ENCODE measurements at regions of chr9 and their contacts with region 1.

Region 1: DNA sequence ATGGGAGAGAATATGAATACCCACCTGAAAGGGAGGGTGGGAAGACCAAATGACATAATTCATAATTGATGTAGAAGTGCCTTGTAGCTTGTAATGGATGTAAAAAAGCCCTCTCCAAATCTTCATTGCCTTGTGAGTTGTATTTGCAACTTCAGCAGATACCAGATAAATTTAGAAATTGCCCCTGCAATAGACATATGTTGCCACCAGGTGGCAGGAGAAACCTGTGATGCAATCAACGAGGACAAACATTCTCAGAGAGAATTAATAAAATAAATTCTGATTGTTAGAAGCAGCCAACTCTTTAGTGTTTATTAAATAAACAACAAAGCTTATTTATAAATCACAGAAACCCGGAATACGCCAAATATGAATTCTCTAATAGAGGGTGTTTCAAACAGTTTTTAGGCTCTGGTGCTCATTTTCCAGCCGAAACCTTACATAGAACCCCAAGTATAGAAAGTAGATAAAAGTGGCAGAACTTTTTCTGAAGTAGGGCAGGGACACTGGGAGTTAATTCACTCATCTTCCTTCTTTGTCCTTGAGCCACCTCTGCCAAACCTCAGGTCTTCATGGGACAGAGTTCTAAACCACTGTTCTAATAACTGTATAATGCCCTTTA is 147.8 kb downstream of the TMEM38B start:
- DNase-seq: peak; percentile 46
- H3K4me3 Mint-ChIP-seq: no peak overlapping the region
- H3K27ac Mint-ChIP-seq: no peak overlapping the region
- H3K4me1 Mint-ChIP-seq: no peaks in the 10 kb centered on the region
- H3K27me3 Mint-ChIP-seq: peaks cover 19% of the 10 kb centered on the region
- CTCF ChIP-seq: peak; percentile 93

Region 2: GRCh38 chr9:105447814-105448812 is 394.0 kb before region 1 on chr9 and contains the start of gene FSD1L:
- CTCF ChIA-PET with region 1: no interaction called
- POLR2A ChIA-PET with region 1: no interaction called
- intact Hi-C with region 1: no loop called
- DNase-seq: peak; percentile 90
- H3K4me3 Mint-ChIP-seq: peak within 1 kb of the TSS; percentile 93
- H3K27ac Mint-ChIP-seq: peak within 1 kb of the TSS; percentile 83
- H3K4me1 Mint-ChIP-seq: peaks cover 20% of the 10 kb centered on the region
- H3K27me3 Mint-ChIP-seq: no peaks in the 10 kb centered on the region
- CTCF ChIP-seq: peak; percentile 15
- total RNA-seq, gene FSD1L: 6.8 and 7.2 TPM in 2 replicates

Region 3: DNA sequence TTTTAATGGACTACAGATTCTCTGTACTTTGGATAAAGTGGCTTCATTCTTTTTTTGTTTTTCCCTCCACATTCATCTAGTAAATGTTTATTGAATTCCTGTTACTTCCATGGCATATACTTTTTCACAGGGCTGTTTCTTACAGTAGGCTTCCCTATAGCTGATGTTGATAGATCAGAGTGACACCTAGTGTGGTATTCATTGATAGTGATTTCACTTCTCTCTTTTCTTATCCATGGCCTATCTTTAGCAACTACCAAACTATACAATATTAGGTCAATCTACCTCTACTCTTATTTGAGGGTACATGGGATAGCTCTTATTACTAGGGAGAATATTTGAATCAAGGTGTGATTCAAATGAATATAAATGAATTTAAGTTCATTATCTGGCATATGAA is 358.5 kb before region 1 on chr9:
- CTCF ChIA-PET with region 1: no interaction called
- POLR2A ChIA-PET with region 1: no interaction called
- intact Hi-C with region 1: no loop called
- DNase-seq: no peak
- H3K4me3 Mint-ChIP-seq: no peak overlapping the region
- H3K27ac Mint-ChIP-seq: no peak overlapping the region
- H3K4me1 Mint-ChIP-seq: no peaks in the 10 kb centered on the region
- H3K27me3 Mint-ChIP-seq: no peaks in the 10 kb centered on the region
- CTCF ChIP-seq: no peak

Region 4: GRCh38 chr9:105858006-105858690 is 16.0 kb after region 1 on chr9:
- CTCF ChIA-PET with region 1: interaction called, 30 read pairs
- POLR2A ChIA-PET with region 1: interaction called, 3 read pairs
- intact Hi-C with region 1: no loop called
- DNase-seq: no peak
- H3K4me3 Mint-ChIP-seq: no peak overlapping the region
- H3K27ac Mint-ChIP-seq: no peak overlapping the region
- H3K4me1 Mint-ChIP-seq: peaks cover 13% of the 10 kb centered on the region
- H3K27me3 Mint-ChIP-seq: no peaks in the 10 kb centered on the region
- CTCF ChIP-seq: no peak

Region 5: DNA sequence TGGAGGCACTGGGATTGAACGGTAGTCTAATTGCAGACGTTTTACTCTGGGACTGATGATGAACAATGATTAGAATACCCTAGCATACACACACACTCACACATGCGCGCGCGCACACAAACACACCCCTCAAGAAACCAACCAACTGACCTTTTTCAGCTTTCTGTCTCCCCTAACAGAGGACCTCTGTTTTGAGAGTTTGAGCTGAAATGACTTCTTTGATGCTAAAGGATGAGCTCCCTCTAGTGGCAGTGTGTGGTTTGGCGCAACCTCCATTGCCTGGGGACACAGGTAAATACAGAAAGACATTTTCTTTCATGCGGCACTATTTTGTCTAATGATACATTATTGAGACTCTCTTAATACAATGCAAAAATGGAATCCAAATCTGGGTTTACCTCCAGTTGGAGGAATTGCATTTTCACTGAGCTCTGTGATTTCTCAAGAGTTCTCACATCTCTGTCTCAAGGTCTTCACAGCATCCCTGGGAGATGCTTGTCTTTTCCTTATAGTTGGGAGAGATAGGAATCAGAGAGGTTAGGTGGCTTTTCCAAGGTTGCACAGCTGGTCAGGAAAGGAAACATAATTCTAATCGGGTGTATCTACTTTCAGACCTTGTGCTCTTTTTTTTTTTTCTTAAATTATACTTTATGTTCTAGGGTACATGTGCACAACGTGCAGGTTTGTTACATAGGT is 39.7 kb after region 1 on chr9:
- CTCF ChIA-PET with region 1: interaction called, 308 read pairs
- POLR2A ChIA-PET with region 1: interaction called, 11 read pairs
- intact Hi-C with region 1: loop called (anchors 1 kb)
- DNase-seq: peak; percentile 74
- H3K4me3 Mint-ChIP-seq: no peak overlapping the region
- H3K27ac Mint-ChIP-seq: no peak overlapping the region
- H3K4me1 Mint-ChIP-seq: no peaks in the 10 kb centered on the region
- H3K27me3 Mint-ChIP-seq: peaks cover 13% of the 10 kb centered on the region
- CTCF ChIP-seq: peak; percentile 69

Region 6: DNA sequence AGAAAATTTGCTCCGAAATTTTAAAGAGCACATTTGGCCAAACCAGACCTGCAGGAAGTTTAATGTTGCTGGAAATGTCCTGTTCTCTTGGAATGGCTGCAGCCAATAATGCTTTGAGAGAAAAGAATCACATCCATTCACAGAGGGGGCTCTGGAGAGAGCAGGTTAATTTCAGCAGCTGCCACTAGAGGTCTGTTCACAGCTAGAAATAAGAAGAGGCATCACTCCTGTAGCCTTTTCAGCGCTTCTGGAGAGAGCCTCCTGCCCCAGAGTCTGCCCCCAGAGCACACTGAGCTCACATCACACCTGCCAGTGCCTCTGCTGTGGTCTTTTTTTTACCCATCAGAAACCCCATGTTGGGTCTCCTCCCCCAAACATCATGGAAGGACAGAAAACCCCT is 1316.2 kb after region 1 on chr9:
- CTCF ChIA-PET with region 1: interaction called, 3 read pairs
- POLR2A ChIA-PET with region 1: no interaction called
- intact Hi-C with region 1: loop called (anchors 5 kb)
- DNase-seq: peak; percentile 36
- H3K4me3 Mint-ChIP-seq: no peak overlapping the region
- H3K27ac Mint-ChIP-seq: no peak overlapping the region
- H3K4me1 Mint-ChIP-seq: peaks cover 4% of the 10 kb centered on the region
- H3K27me3 Mint-ChIP-seq: peaks cover 18% of the 10 kb centered on the region
- CTCF ChIP-seq: peak; percentile 29

Measured in MCF 10A (cell line).